IMR-90 (cell line): ENCODE measurements at regions of chr3 and their contacts with region 1.

Region 1: DNA sequence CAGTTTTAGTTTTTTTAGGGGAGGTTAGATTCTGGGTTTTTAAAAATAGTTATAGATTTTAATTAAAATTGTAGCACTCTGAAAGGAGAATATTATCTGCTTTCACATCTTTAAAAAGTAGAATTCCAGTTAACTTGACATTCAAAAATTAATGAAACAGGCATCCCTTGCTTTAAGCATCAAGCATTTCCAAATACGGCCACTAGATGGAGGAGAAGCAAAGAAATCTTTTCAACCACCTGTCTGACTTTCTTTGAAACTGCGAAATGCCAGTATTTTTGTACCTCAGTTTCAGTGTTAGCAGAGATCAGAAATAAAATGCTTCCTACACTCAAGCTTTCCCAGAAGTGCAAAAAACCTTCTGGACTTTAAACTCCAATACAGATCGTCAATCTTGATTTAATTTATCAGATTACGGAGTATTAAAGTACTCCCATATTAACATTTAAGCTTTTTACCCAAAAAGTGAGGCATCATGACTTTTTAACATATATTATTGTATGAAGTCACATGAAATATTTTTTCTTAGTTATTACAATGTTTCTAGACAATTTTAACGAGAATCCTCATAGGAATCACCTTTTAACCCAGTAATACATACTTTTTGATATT is 153.3 kb downstream of the P3H2 start:
- DNase-seq: peak; percentile 65
- ATAC-seq: peak; percentile 54; the same call in 1 of the 2 replicates
- H3K4me3 ChIP-seq: no peak overlapping the region
- H3K27ac ChIP-seq: no peak overlapping the region
- H3K4me1 ChIP-seq: no peaks in the 10 kb centered on the region
- H3K27me3 ChIP-seq: no peaks in the 10 kb centered on the region
- CTCF ChIP-seq: peak; percentile 89
- POLR2A ChIP-seq: no peak
- RAD21 ChIP-seq: peak; percentile 87

Region 2: GRCh38 chr3:190239325-190239724 is 272.0 kb after region 1 on chr3:
- CTCF ChIA-PET with region 1: no interaction called
- POLR2A ChIA-PET with region 1: no interaction called
- dilution Hi-C with region 1: no loop called
- in situ Hi-C with region 1: no loop called
- intact Hi-C with region 1: no loop called
- DNase-seq: no peak
- ATAC-seq: no peak
- H3K4me3 ChIP-seq: no peak overlapping the region
- H3K27ac ChIP-seq: no peak overlapping the region
- H3K4me1 ChIP-seq: no peaks in the 10 kb centered on the region
- H3K27me3 ChIP-seq: no peaks in the 10 kb centered on the region
- CTCF ChIP-seq: no peak
- POLR2A ChIP-seq: no peak
- RAD21 ChIP-seq: no peak

Region 3: DNA sequence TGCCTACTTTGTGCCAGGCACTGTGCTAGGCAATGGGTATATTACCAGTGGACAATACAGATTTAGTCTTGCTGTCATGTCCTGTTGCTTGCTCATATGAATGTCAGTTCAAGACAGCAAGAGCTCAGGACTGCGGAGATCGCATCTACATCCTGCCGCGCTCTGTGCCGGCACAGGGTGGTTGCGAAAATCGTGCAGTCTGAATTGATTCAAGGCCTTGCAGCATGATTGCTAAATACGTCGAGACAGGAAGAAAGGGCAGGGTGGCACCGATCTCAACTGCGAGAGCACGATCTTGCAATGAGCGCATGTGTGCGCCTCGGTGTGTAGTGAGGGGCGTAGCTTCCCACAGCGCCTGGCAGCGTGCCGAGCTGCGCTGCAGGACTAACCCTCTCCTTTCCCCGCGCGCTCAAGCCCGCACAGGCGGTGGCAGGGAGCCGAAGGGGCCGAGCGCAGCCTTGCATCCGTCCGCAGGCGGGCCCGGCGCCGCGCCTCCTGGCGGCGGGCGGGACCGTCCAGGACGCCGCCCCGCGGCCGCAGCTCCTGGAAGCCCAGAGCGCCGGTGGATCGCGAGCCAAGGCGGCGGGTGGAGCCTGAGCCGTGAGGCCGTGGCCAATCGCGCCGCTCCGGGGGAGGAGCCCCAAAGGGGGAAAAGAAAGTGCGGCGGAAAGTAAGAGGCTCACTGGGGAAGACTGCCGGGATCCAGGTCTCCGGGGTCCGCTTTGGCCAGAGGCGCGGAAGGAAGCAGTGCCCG is 546.2 kb after region 1 on chr3 and contains the start of gene IL1RAP:
- CTCF ChIA-PET with region 1: no interaction called
- POLR2A ChIA-PET with region 1: no interaction called
- dilution Hi-C with region 1: no loop called
- in situ Hi-C with region 1: no loop called
- intact Hi-C with region 1: loop called (anchors 1 kb)
- DNase-seq: peak; percentile 88
- ATAC-seq: peak; percentile 98
- H3K4me3 ChIP-seq: peak within 1 kb of the TSS; percentile 60
- H3K27ac ChIP-seq: peak within 1 kb of the TSS; percentile 60
- H3K4me1 ChIP-seq: peaks cover 7% of the 10 kb centered on the region; the same call in 1 of the 2 replicates
- H3K27me3 ChIP-seq: no peaks in the 10 kb centered on the region
- CTCF ChIP-seq: peak; percentile 77
- POLR2A ChIP-seq: peak; percentile 56
- RAD21 ChIP-seq: peak; percentile 46
- total RNA-seq, gene IL1RAP: 9.4 and 11.3 TPM in 2 replicates